Activated B cell treated with CpG ODN at 0.5 μM for 24 hours (primary cell): ENCODE measurements at regions of chr10 and their contacts with region 1.

Region 1: DNA sequence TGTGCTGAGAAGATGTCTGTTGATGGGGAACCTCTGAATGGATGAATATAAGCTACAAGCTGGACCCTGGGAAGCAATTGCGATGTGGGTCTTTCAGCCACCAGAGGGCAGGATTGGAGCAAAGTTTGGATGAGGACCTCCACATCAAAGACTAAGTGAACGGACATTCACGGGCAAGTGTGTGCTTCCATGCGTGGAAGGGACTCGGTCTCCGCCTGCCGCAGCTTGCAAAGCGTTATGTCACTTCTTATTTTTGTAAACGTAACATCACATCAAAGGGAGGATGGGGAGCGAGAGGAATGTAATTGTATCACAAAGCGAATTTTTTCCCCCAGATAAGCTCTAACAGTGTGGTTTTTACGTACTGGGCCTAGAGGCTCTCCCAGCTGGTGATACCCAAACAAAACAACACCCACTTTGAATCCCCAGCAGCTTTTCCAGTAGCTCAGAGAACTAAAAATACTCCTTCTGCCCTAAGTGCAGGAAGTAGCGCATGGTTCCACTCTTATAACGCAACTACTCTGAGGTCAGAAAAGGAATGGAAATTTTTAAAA is 65.0 kb downstream of the VWA2 start:
- DNase-seq: peak; percentile 46
- ATAC-seq: peak; percentile 53
- H3K4me3 Mint-ChIP-seq: peak overlapping the region; percentile 86
- H3K27ac Mint-ChIP-seq: peak overlapping the region; percentile 47
- H3K4me1 Mint-ChIP-seq: peaks cover 12% of the 10 kb centered on the region
- H3K27me3 Mint-ChIP-seq: no peaks in the 10 kb centered on the region
- CTCF ChIP-seq: peak; percentile 15

Region 2: DNA sequence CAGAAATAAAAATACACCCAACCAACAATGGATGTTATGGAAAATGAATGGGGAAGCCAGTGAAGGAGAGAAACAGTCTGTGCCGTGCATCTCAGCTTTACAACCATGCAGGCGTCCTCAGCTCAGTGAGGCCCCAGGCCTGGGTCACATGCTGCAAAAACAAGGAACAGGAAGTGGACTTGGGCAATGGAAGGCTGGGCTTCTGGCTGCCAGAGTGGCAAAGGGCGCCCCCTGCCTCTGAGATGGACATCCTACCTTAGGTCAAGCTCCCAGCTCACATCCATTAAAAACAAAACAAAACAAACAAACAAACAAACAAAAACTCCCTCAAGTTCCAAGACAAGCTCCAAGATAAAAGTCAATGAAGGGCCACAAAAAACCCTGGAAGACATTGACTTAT is 154.9 kb after region 1 on chr10:
- CTCF ChIA-PET with region 1: interaction called, 5 read pairs
- POLR2A ChIA-PET with region 1: no interaction called
- intact Hi-C with region 1: loop called (anchors 2 kb)
- DNase-seq: no peak
- ATAC-seq: peak; percentile 28
- H3K4me3 Mint-ChIP-seq: no peak overlapping the region
- H3K27ac Mint-ChIP-seq: peak overlapping the region; percentile 37
- H3K4me1 Mint-ChIP-seq: no peaks in the 10 kb centered on the region
- H3K27me3 Mint-ChIP-seq: no peaks in the 10 kb centered on the region
- CTCF ChIP-seq: no peak

Region 3: GRCh38 chr10:114694752-114695151 is 390.7 kb after region 1 on chr10:
- CTCF ChIA-PET with region 1: no interaction called
- POLR2A ChIA-PET with region 1: no interaction called
- intact Hi-C with region 1: loop called (anchors 2 kb)
- DNase-seq: no peak
- ATAC-seq: no peak
- H3K4me3 Mint-ChIP-seq: no peak overlapping the region
- H3K27ac Mint-ChIP-seq: no peak overlapping the region
- H3K4me1 Mint-ChIP-seq: no peaks in the 10 kb centered on the region
- H3K27me3 Mint-ChIP-seq: peaks cover 4% of the 10 kb centered on the region
- CTCF ChIP-seq: no peak

Region 4: GRCh38 chr10:114779803-114780609 is 475.9 kb after region 1 on chr10:
- CTCF ChIA-PET with region 1: interaction called, 15 read pairs
- POLR2A ChIA-PET with region 1: no interaction called
- intact Hi-C with region 1: no loop called
- DNase-seq: no peak
- ATAC-seq: no peak
- H3K4me3 Mint-ChIP-seq: no peak overlapping the region
- H3K27ac Mint-ChIP-seq: no peak overlapping the region
- H3K4me1 Mint-ChIP-seq: no peaks in the 10 kb centered on the region
- H3K27me3 Mint-ChIP-seq: no peaks in the 10 kb centered on the region
- CTCF ChIP-seq: no peak

Region 5: GRCh38 chr10:114876602-114877300 is 572.7 kb after region 1 on chr10:
- CTCF ChIA-PET with region 1: no interaction called
- POLR2A ChIA-PET with region 1: no interaction called
- intact Hi-C with region 1: loop called (anchors 1 kb)
- DNase-seq: no peak
- ATAC-seq: peak; percentile 60
- H3K4me3 Mint-ChIP-seq: no peak overlapping the region
- H3K27ac Mint-ChIP-seq: no peak overlapping the region
- H3K4me1 Mint-ChIP-seq: peaks cover 13% of the 10 kb centered on the region
- H3K27me3 Mint-ChIP-seq: peaks cover 37% of the 10 kb centered on the region
- CTCF ChIP-seq: no peak

Region 6: DNA sequence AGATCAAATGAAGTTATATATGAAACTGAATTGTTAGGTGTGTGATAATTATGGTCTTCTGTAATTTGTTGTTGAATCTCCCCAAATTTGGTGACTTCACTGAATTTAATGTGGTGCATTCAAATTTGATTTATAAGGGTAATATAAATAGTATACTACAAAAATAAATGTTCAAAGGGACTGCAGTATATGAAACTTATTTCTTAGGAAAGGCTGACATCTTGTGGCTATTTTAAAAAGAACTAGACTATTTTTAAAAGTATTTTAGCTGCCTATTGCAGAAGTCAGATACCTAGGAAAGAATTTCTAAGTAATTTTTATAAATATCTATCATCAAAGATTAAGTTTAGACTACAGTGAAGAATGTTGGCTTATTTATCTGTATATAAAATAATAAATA is 825.7 kb after region 1 on chr10:
- CTCF ChIA-PET with region 1: interaction called, 28 read pairs
- POLR2A ChIA-PET with region 1: no interaction called
- intact Hi-C with region 1: loop called (anchors 1 kb)
- DNase-seq: no peak
- ATAC-seq: no peak
- H3K4me3 Mint-ChIP-seq: no peak overlapping the region
- H3K27ac Mint-ChIP-seq: no peak overlapping the region
- H3K4me1 Mint-ChIP-seq: no peaks in the 10 kb centered on the region
- H3K27me3 Mint-ChIP-seq: peaks cover 2% of the 10 kb centered on the region
- CTCF ChIP-seq: no peak